IMR-90 (cell line): ENCODE measurements at regions of chr11 and their contacts with region 1.

Region 1: DNA sequence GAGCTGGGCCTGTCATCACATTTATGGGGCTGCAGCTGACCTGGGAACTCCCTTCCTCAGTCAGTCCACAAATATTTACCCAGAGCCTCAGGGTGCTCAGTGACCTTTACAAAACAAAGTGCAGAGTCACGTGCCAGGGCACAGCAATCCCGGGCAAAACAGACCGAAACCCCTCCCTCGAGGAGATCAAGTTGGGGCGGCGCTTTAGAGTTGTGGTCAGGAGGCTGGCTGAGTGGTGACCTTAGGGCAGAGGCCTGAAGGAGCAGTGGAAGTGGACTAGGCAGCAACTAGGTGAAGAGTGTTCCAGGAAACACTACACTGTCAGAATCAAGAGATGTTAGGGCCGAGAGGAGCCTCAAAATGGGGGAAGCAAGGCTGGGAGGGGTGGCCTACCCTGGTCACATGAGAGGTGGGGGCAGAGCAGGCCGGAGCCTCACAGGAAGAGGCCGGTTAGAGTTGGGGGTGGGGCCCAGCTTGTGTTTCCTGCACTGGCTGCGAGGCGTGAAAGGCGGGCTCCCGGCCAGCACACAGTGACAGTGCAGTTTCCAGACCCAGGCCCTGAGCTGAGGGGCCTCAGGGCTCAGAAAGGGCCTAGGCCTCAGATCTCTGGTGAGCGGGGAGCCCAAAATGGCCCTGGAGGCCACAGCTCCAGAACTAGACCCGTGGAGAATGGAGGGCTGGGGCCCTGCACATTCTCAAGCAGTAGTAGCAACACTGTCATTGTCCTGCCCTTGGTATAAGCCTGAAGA is 3.7 kb upstream of the NEAT1 start:
- DNase-seq: peak; percentile 91
- ATAC-seq: peak; percentile 35
- H3K4me3 ChIP-seq: peak overlapping the region; percentile 16; the same call in 1 of the 2 replicates
- H3K27ac ChIP-seq: peak overlapping the region; percentile 98
- H3K4me1 ChIP-seq: peaks cover 38% of the 10 kb centered on the region
- H3K27me3 ChIP-seq: no peaks in the 10 kb centered on the region
- CTCF ChIP-seq: no peak
- POLR2A ChIP-seq: peak; percentile 81
- RAD21 ChIP-seq: no peak

Region 2: GRCh38 chr11:65132988-65133700 is 285.7 kb before region 1 on chr11:
- CTCF ChIA-PET with region 1: no interaction called
- POLR2A ChIA-PET with region 1: no interaction called
- dilution Hi-C with region 1: no loop called
- in situ Hi-C with region 1: no loop called
- intact Hi-C with region 1: no loop called
- DNase-seq: no peak
- ATAC-seq: no peak
- H3K4me3 ChIP-seq: peak overlapping the region; percentile 63
- H3K27ac ChIP-seq: peak overlapping the region; percentile 99
- H3K4me1 ChIP-seq: peaks cover 6% of the 10 kb centered on the region; the same call in 1 of the 2 replicates
- H3K27me3 ChIP-seq: no peaks in the 10 kb centered on the region
- CTCF ChIP-seq: no peak
- POLR2A ChIP-seq: no peak
- RAD21 ChIP-seq: no peak

Region 3: DNA sequence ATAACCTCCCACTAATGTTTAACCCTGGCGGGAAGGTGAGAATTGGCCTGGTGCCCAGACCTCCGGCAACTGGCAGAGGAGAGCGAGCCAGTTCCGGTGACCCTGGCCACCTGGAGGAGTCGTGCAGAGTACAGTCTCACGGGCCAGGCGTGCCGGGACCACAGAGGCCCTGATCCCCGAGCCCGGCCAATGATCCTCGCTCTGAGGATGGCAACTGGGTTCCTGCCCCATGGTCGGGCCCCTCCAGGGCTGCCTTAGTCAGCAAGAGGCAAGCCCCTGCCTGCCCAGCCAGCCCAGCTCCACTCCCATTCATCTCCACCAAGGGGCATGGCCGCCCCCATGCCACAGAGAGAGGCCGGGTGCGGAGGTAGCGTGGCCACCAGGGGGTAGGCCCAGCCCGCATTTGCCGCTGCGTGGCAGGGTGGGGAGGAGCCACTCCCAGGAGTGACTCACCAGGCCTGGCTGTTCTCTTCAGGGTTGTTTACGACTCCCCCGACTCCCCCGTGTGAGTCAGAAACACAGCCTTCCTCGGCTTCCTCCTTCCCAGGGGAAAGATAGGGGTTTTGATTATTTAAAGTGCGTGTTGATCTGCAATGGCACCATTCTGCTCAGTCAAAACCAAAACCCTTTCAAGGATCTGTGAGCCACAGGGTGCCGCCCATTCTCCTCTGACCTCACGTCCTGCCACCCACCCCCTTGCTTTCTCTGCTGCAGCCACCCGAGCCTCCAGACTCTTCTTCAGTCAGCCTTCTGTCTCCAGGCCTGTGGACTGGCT is 36.7 kb before region 1 on chr11 and contains the start of gene SLC25A45:
- CTCF ChIA-PET with region 1: interaction called, 8 read pairs
- POLR2A ChIA-PET with region 1: interaction called, 7 read pairs
- dilution Hi-C with region 1: no loop called
- in situ Hi-C with region 1: no loop called
- intact Hi-C with region 1: loop called (anchors 1 kb)
- DNase-seq: peak; percentile 99
- ATAC-seq: peak; percentile 84
- H3K4me3 ChIP-seq: peak within 1 kb of the TSS; percentile 21
- H3K27ac ChIP-seq: peak within 1 kb of the TSS; percentile 89
- H3K4me1 ChIP-seq: peaks cover 27% of the 10 kb centered on the region
- H3K27me3 ChIP-seq: no peaks in the 10 kb centered on the region
- CTCF ChIP-seq: peak; percentile 88
- POLR2A ChIP-seq: peak; percentile 52; the same call in 1 of the 2 replicates
- RAD21 ChIP-seq: peak; percentile 86
- total RNA-seq, gene SLC25A45: 0.56 and 0.72 TPM in 2 replicates

Region 4: GRCh38 chr11:65403607-65404121 is 15.2 kb before region 1 on chr11:
- CTCF ChIA-PET with region 1: interaction called, 6 read pairs
- POLR2A ChIA-PET with region 1: interaction called, 10 read pairs
- dilution Hi-C with region 1: no loop called
- in situ Hi-C with region 1: no loop called
- intact Hi-C with region 1: no loop called
- DNase-seq: no peak
- ATAC-seq: no peak
- H3K4me3 ChIP-seq: no peak overlapping the region
- H3K27ac ChIP-seq: no peak overlapping the region
- H3K4me1 ChIP-seq: 0 out of 2 replicates have a peak, but pooled peaks cover 1% of the 10 kb centered on the region
- H3K27me3 ChIP-seq: no peaks in the 10 kb centered on the region
- CTCF ChIP-seq: no peak
- POLR2A ChIP-seq: no peak
- RAD21 ChIP-seq: no peak

Region 5: GRCh38 chr11:65477149-65477965 is 58.5 kb after region 1 on chr11:
- CTCF ChIA-PET with region 1: interaction called, 6 read pairs
- POLR2A ChIA-PET with region 1: interaction called, 58 read pairs
- dilution Hi-C with region 1: no loop called
- in situ Hi-C with region 1: no loop called
- intact Hi-C with region 1: no loop called
- DNase-seq: peak; percentile 92
- ATAC-seq: peak; percentile 72
- H3K4me3 ChIP-seq: peak overlapping the region; percentile 73
- H3K27ac ChIP-seq: peak overlapping the region; percentile 100
- H3K4me1 ChIP-seq: peaks cover 22% of the 10 kb centered on the region
- H3K27me3 ChIP-seq: no peaks in the 10 kb centered on the region
- CTCF ChIP-seq: no peak
- POLR2A ChIP-seq: peak; percentile 83
- RAD21 ChIP-seq: no peak; the same call in 1 of the 2 replicates

Region 6: DNA sequence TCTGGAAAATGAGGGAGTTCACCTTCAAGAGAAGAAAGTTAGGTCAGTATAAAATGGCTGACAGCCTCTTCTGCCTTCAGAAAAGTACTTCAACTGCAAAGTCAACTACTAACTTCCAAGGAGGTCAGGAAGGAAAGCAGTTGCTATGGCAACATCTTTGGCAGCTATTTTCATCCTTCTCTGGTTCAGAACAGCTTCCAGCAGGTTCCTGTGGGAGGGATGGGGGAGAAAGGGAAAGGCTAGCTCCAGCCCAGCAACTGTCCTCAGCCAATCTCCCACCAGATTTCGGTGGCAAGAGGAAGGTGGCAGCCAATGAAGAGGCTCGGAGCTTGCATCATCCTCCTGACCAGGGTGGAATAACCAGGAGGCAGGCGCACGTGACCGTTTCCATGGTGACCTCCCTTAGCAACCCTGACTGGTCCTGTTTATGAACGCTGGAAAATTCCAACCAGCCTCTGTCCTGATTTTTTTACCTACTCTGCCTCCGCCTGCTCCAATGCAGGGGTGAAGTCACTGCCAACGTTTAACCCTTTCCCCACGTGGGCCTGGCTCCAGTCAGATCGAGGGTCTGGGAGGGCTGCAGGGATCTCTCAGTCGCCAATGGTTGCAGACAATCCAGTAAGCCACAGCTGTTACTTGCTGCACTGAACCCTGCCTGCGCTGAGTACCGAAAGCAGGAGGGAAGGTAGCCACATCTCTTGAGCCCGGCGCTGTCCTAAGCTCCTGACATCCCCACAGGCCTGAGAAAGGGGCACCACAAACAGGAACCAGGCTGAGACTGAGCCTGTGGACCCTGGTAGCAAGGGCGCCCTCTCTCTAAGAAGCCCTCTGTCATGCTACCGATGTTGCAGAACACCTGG is 68.8 kb after region 1 on chr11:
- CTCF ChIA-PET with region 1: no interaction called
- POLR2A ChIA-PET with region 1: interaction called, 20 read pairs
- dilution Hi-C with region 1: no loop called
- in situ Hi-C with region 1: no loop called
- intact Hi-C with region 1: no loop called
- DNase-seq: peak; percentile 100
- ATAC-seq: peak; percentile 78
- H3K4me3 ChIP-seq: no peak overlapping the region
- H3K27ac ChIP-seq: peak overlapping the region; percentile 85
- H3K4me1 ChIP-seq: peaks cover 51% of the 10 kb centered on the region
- H3K27me3 ChIP-seq: no peaks in the 10 kb centered on the region
- CTCF ChIP-seq: no peak
- POLR2A ChIP-seq: peak; percentile 58; the same call in 1 of the 2 replicates
- RAD21 ChIP-seq: 0 out of 2 replicates have a peak, but pooled peaks have one; percentile 13

Region 7: GRCh38 chr11:65512306-65512705 is 93.4 kb after region 1 on chr11:
- CTCF ChIA-PET with region 1: interaction called, 7 read pairs
- POLR2A ChIA-PET with region 1: interaction called, 78 read pairs
- dilution Hi-C with region 1: no loop called
- in situ Hi-C with region 1: loop called (anchors 5 kb)
- intact Hi-C with region 1: loop called (anchors 1 kb)
- DNase-seq: no peak
- ATAC-seq: no peak
- H3K4me3 ChIP-seq: no peak overlapping the region
- H3K27ac ChIP-seq: no peak overlapping the region
- H3K4me1 ChIP-seq: no peaks in the 10 kb centered on the region
- H3K27me3 ChIP-seq: no peaks in the 10 kb centered on the region
- CTCF ChIP-seq: no peak
- POLR2A ChIP-seq: no peak
- RAD21 ChIP-seq: no peak